CD4-positive, alpha-beta T cell (primary cell): ENCODE measurements at regions of chrX and their contacts with region 1.

Region 1: DNA sequence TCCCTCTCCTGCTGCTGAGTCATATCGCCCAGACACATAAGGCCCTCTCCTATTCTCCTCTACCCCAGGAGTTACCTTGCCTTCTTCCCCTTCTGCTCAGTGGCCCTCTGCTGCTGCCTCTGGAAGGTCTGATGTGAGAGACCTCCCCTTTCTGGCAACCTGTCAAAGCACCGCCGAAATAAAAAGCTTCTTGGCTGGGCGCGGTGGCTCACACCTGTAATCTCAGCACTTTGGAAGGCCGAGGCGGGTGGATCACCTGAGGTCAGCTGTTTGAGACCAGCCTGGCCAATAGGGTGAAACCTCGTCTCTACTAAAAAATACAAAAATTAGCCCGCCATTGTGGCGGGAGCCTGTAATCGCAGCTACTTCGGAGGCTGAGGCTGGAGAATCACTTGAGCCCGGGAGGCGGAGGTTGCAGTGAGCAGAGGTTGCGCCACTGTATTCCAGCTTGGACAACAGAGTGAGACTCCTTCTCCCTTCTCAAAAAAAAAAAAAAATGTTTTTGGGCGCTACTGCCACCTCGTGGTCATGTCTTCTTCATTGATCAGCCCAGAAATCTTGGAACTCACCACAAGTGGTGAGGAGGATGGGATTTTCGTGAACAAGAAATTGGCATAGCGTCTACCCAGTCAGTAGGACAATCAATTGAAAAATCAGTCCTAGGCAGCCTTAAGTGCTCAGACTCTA is 8.6 kb upstream of the ZXDA start:
- DNase-seq: peak in 6 of 14 experiments; percentile 1 to 60 (median 43)
- ATAC-seq: no peak
- H3K4me3 ChIP-seq: no peak overlapping the region
- H3K4me3 Mint-ChIP-seq: no peak overlapping the region
- H3K27ac ChIP-seq: no peak overlapping the region
- H3K27ac Mint-ChIP-seq: no peak overlapping the region
- H3K4me1 ChIP-seq: peaks cover 3% of the 10 kb centered on the region
- H3K4me1 Mint-ChIP-seq: no peaks in the 10 kb centered on the region
- H3K27me3 ChIP-seq: no peaks in the 10 kb centered on the region
- H3K27me3 Mint-ChIP-seq: no peaks in the 10 kb centered on the region
- CTCF ChIP-seq: peak; percentile 54

Region 2: DNA sequence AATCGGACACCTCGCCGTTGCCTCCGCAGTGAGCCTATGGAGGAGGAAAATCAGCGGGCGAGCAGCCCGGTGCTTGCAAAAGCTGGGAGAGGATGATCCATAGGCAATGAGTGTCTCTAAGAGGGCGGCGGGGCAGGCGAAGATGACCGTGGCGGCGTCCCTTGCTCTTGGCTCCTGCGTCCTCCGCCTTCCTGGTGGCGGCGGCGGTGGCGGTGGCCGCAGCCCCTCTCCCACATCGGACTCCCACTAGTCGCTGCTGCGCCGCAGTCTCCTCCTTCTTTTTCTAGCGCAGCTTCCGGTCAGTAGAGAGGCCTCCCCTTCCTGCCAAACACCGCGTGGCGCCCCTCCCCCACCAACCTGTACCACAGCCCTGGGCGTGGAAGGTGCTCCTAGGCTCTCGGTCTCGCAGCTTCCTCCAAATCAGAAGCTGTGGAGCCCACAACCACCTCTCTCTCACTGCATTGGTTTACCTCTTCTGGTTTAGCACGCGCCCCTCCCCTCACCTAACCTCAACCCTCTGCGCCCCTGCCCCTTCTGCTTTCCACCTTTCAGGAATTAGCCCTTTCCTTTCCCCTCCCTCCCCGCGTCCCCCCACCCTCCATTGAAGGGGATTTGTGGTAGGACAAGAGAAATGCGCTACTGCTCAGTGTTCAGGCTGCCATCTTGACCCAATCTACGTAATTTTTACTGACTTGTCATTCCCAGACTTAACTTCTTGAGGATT is 923.5 kb before region 1 on chrX and contains the start of gene SPIN3:
- CTCF ChIA-PET with region 1: no interaction called
- POLR2A ChIA-PET with region 1: no interaction called
- intact Hi-C with region 1: loop called in 1 of 2 experiments (anchors 10 kb)
- DNase-seq: peak; percentile 20 to 70 (median 53)
- ATAC-seq: peak; percentile 84
- H3K4me3 ChIP-seq: peak within 1 kb of the TSS; percentile 73
- H3K4me3 Mint-ChIP-seq: peak within 1 kb of the TSS; percentile 98
- H3K27ac ChIP-seq: peak within 1 kb of the TSS; percentile 25 to 55
- H3K27ac Mint-ChIP-seq: peak within 1 kb of the TSS; percentile 96
- H3K4me1 ChIP-seq: peaks cover 8% of the 10 kb centered on the region
- H3K4me1 Mint-ChIP-seq: peaks cover 50% of the 10 kb centered on the region
- H3K27me3 ChIP-seq: no peaks in the 10 kb centered on the region
- H3K27me3 Mint-ChIP-seq: no peaks in the 10 kb centered on the region
- CTCF ChIP-seq: no peak
- total RNA-seq, gene SPIN3: 6.8 to 8.8 TPM

Region 3: GRCh38 chrX:57121162-57121741 is 797.6 kb before region 1 on chrX and contains the start of gene SPIN2B:
- CTCF ChIA-PET with region 1: no interaction called
- POLR2A ChIA-PET with region 1: no interaction called
- intact Hi-C with region 1: loop called in 1 of 2 experiments (anchors 10 kb)
- DNase-seq: peak; percentile 35 to 85 (median 66)
- ATAC-seq: peak; percentile 99
- H3K4me3 ChIP-seq: peak within 1 kb of the TSS; percentile 73
- H3K4me3 Mint-ChIP-seq: peak within 1 kb of the TSS; percentile 99
- H3K27ac ChIP-seq: peak within 1 kb of the TSS; percentile 2 to 40
- H3K27ac Mint-ChIP-seq: peak within 1 kb of the TSS; percentile 92
- H3K4me1 ChIP-seq: no peaks in the 10 kb centered on the region
- H3K4me1 Mint-ChIP-seq: peaks cover 14% of the 10 kb centered on the region
- H3K27me3 ChIP-seq: no peaks in the 10 kb centered on the region
- H3K27me3 Mint-ChIP-seq: no peaks in the 10 kb centered on the region
- CTCF ChIP-seq: no peak
- total RNA-seq, gene SPIN2B: 7.9 to 8.7 TPM

Region 4: DNA sequence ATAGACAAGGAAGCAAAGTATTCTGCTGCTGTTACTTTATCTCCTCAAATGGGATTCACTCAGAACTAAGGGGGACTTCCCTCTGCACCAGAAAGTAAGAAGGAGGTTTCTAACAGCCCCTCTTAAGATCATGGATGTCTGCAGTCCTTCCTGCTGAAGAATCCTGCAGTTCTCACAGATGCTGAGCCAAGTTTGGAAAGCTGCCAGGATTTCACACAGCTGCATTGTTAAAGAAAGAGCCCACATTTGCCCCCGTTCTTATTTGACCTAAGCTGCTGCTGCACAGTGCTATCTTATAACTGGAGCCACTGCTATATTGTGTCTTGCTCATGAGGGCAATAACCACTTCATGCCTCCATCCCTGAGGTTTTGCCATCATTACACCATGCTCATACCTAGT is 551.2 kb before region 1 on chrX:
- CTCF ChIA-PET with region 1: no interaction called
- POLR2A ChIA-PET with region 1: no interaction called
- intact Hi-C with region 1: no loop called
- DNase-seq: no peak
- ATAC-seq: no peak
- H3K4me3 ChIP-seq: no peak overlapping the region
- H3K4me3 Mint-ChIP-seq: no peak overlapping the region
- H3K27ac ChIP-seq: no peak overlapping the region
- H3K27ac Mint-ChIP-seq: no peak overlapping the region
- H3K4me1 ChIP-seq: no peaks in the 10 kb centered on the region
- H3K4me1 Mint-ChIP-seq: no peaks in the 10 kb centered on the region
- H3K27me3 ChIP-seq: no peaks in the 10 kb centered on the region
- H3K27me3 Mint-ChIP-seq: no peaks in the 10 kb centered on the region
- CTCF ChIP-seq: no peak

Region 5: DNA sequence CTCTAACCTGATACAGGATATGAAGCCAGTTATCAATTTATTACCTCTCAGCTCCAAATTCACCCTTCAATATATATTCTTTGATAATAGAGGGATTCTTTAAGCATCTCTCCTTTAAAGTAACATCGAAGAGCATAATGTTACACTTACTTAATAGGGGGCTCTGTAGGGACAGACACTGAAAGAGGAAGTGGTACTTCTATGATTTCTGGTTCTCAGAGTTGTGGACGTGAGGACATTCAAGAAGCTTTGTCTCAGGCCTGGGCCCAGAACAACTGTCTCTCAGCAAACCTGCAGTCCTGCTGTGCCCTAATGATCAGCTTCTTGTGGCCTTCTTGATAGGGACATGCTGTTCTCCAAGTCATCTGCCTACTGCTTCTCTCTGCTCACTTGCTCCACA is 331.3 kb before region 1 on chrX:
- CTCF ChIA-PET with region 1: no interaction called
- POLR2A ChIA-PET with region 1: no interaction called
- intact Hi-C with region 1: loop called in 1 of 2 experiments (anchors 5 kb)
- DNase-seq: no peak
- ATAC-seq: no peak
- H3K4me3 ChIP-seq: no peak overlapping the region
- H3K4me3 Mint-ChIP-seq: no peak overlapping the region
- H3K27ac ChIP-seq: no peak overlapping the region
- H3K27ac Mint-ChIP-seq: no peak overlapping the region
- H3K4me1 ChIP-seq: peaks cover 9% of the 10 kb centered on the region
- H3K4me1 Mint-ChIP-seq: peaks cover 25% of the 10 kb centered on the region
- H3K27me3 ChIP-seq: no peaks in the 10 kb centered on the region
- H3K27me3 Mint-ChIP-seq: no peaks in the 10 kb centered on the region
- CTCF ChIP-seq: no peak

Region 6: DNA sequence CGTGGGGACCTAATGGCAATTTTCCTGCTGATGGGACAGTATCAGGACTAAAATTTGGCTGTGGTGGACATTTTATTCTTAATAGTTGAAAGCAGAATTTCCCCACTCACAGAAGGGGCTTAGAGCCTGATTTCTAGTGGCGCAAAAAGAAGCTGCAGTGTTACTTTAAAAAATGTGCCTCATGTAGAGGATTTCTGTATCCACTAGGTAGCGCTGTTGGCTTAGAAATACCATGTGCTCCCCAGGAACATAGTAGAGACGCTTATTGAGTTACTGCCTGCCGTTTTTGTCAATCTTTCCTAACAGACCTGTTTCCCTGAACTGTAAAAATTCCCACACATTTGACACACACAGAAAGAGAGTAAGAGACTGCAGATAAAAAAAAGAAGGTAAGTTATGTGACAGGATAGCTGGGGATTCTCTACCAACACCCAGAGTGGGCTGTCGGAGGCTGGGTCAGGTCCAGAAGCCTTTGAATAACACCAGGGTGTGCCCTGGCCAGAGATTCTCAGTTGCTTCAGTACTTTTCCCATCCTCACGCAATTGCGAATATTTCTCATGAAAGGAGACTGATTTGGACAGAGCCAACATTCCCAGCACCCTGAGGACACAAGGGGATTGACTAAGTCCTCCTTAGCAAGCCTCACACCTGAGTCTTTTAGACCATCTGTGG is 97.1 kb before region 1 on chrX:
- CTCF ChIA-PET with region 1: no interaction called
- POLR2A ChIA-PET with region 1: no interaction called
- intact Hi-C with region 1: loop called (anchors 1 kb)
- DNase-seq: peak in 9 of 14 experiments; percentile 1 to 75 (median 22)
- ATAC-seq: peak; percentile 46
- H3K4me3 ChIP-seq: no peak overlapping the region
- H3K4me3 Mint-ChIP-seq: no peak overlapping the region
- H3K27ac ChIP-seq: no peak overlapping the region
- H3K27ac Mint-ChIP-seq: no peak overlapping the region
- H3K4me1 ChIP-seq: peaks cover 4% of the 10 kb centered on the region
- H3K4me1 Mint-ChIP-seq: peaks cover 5% of the 10 kb centered on the region
- H3K27me3 ChIP-seq: no peaks in the 10 kb centered on the region
- H3K27me3 Mint-ChIP-seq: no peaks in the 10 kb centered on the region
- CTCF ChIP-seq: peak; percentile 63

Region 7: GRCh38 chrX:57900975-57901374 is 17.9 kb before region 1 on chrX:
- CTCF ChIA-PET with region 1: no interaction called
- POLR2A ChIA-PET with region 1: no interaction called
- intact Hi-C with region 1: no loop called
- DNase-seq: no peak
- ATAC-seq: no peak
- H3K4me3 ChIP-seq: no peak overlapping the region
- H3K4me3 Mint-ChIP-seq: no peak overlapping the region
- H3K27ac ChIP-seq: no peak overlapping the region
- H3K27ac Mint-ChIP-seq: no peak overlapping the region
- H3K4me1 ChIP-seq: peaks cover 3% of the 10 kb centered on the region
- H3K4me1 Mint-ChIP-seq: peaks cover 22% of the 10 kb centered on the region
- H3K27me3 ChIP-seq: no peaks in the 10 kb centered on the region
- H3K27me3 Mint-ChIP-seq: no peaks in the 10 kb centered on the region
- CTCF ChIP-seq: no peak